ENCODE measurements at regions of chr13 and their contacts with region 1.

Region 1: DNA sequence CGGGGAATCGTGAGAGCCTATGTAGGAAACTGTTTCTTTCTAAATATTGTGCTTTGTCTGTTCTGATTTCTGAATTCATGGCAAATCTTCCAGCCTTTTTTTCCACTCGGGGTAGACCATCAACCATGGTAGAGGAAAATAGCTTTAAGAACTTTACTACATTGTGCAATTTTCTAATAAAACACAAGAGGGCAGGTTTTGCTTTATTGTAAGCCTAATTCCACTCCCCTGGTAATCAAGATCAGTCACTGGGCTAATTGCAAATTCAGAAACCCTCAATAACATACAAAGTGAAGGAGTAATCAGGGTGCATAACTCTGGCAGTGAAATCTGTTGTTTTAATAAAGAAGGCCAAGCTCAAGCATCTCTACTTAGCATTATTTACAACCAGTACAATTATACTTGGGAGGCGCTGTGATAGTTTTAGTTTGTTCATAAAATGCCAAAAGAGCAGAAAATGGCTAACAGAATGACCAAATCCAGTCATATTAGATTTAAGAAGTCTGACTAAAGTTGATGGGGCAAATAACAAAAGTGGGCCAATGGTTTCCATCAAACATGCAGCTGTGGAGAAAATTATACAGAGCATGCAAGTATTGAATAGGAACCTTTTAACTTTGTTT is 43.8 kb downstream of the DCT start:
- DNase-seq: peak; percentile 60
- H3K4me3 ChIP-seq: no peak overlapping the region; a peak in 1 of 4 replicates
- H3K27ac ChIP-seq: no peak overlapping the region
- H3K4me1 ChIP-seq: no peaks in the 10 kb centered on the region; a peak in 1 of 4 replicates
- H3K27me3 ChIP-seq: no peaks in the 10 kb centered on the region; the same call in 1 of the 2 replicates
- CTCF ChIP-seq: peak; percentile 74
- EP300 ChIP-seq: no peak
- RAD21 ChIP-seq: peak; percentile 88

Region 2: DNA sequence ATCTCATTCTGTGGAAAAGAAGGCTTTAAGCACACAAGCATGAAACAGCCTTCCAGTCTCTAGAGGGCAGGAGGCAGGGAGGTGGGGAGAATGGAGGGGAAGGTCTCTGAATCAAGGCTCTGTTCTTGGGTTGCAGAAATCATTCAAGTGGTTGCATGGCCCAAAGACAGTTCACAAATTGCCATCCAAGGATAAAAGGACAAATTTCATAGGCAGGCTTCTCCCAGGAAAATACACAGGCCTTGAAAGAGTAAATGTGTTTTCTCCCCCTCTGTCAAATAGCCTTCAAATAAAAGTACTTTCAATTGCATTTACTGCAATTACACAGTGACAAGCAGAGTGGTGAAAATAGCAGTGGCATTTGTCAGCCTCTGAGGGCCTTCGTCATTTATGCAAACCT is 407.1 kb before region 1 on chr13:
- CTCF ChIA-PET with region 1: no interaction called
- POLR2A ChIA-PET with region 1: no interaction called
- DNase-seq: no peak
- H3K4me3 ChIP-seq: no peak overlapping the region
- H3K27ac ChIP-seq: no peak overlapping the region; a peak in 1 of 4 replicates
- H3K4me1 ChIP-seq: peaks cover 14 to 20% of the 10 kb centered on the region in 2 experiments; a peak in 3 of 4 replicates
- H3K27me3 ChIP-seq: no peaks in the 10 kb centered on the region
- CTCF ChIP-seq: no peak
- EP300 ChIP-seq: no peak
- RAD21 ChIP-seq: no peak

Region 3: DNA sequence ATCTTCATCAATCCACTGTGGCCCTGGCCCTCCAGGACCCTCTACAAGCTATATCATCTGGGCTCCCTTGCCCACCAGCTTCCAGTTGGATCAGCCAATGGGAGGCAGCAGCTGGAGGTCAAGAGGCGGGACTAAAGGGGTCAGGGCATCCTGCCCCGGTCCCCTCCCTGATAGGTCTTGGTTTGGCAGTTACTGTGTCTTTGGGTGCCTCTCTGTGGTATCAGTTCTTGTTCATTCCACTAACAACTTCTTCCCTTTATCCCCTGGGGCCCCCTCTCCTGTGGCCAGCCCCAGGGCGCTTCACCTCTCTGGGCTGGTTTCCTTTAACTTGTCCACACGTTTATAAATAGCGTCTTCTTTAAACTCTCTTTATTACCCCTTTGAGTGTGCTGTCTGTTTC is 39.9 kb before region 1 on chr13:
- CTCF ChIA-PET with region 1: no interaction called
- POLR2A ChIA-PET with region 1: no interaction called
- DNase-seq: no peak
- H3K4me3 ChIP-seq: no peak overlapping the region
- H3K27ac ChIP-seq: no peak overlapping the region
- H3K4me1 ChIP-seq: no peaks in the 10 kb centered on the region; a peak in 1 of 4 replicates
- H3K27me3 ChIP-seq: no peaks in the 10 kb centered on the region
- CTCF ChIP-seq: no peak
- EP300 ChIP-seq: no peak
- RAD21 ChIP-seq: no peak

Region 4: DNA sequence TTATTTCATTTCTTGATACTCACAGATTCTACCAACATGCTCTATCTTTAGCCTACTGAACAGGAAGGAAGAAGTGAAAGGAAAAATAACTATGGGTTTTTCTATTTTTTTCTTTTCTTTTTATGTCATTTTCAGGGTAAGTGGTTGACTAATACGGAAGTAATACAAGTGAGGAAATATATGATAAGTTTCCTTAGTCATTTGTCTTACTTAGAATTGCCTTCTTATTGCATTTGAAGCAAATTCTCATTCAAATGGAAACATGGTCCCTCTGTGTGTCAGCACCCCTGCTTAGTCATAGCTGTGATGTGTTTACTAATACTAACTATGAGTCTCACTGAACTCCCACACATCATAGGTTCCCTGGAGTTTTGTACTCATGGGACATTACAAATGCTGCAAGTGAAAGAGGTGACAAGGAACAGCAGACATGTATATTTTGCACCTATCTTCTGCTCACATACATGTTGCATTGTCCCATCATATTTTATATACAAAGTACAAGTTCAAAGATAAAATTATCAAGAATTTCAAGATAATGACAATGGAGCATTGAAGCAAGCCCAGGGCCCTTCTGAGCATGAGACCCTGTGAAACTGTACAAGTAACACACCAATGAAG is 16.3 kb before region 1 on chr13:
- CTCF ChIA-PET with region 1: interaction called, 13 read pairs
- POLR2A ChIA-PET with region 1: no interaction called
- DNase-seq: no peak
- H3K4me3 ChIP-seq: no peak overlapping the region
- H3K27ac ChIP-seq: no peak overlapping the region
- H3K4me1 ChIP-seq: peaks cover 0 to 5% of the 10 kb centered on the region in 2 experiments; a peak in 3 of 4 replicates
- H3K27me3 ChIP-seq: no peaks in the 10 kb centered on the region
- CTCF ChIP-seq: no peak
- EP300 ChIP-seq: no peak
- RAD21 ChIP-seq: no peak

Region 5: DNA sequence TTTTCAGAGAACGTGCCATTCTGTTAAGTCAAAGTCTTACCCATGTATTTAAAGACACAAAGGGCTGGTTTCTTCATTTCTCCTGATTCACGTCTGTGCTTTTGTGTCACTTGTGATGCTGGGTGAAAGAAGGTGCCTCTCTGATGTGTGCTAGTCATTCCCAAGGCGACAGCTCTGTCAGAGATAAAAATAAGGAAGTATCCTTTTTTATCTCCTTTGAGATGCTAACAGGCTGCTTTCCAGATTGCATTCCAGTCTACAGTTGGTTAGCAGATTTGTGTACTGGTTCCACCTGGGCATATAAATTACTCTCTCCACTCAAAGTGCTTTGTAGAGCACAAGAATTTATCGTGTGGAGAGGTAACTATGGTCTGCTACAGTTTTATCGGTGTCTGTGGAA is 77.3 kb after region 1 on chr13:
- CTCF ChIA-PET with region 1: interaction called, 10 read pairs
- POLR2A ChIA-PET with region 1: no interaction called
- DNase-seq: no peak
- H3K4me3 ChIP-seq: no peak overlapping the region
- H3K27ac ChIP-seq: no peak overlapping the region
- H3K4me1 ChIP-seq: no peaks in the 10 kb centered on the region
- H3K27me3 ChIP-seq: no peaks in the 10 kb centered on the region
- CTCF ChIP-seq: no peak
- EP300 ChIP-seq: no peak
- RAD21 ChIP-seq: no peak

Region 6: GRCh38 chr13:94601446-94602431 is 166.0 kb after region 1 on chr13 and contains the start of gene GPR180:
- CTCF ChIA-PET with region 1: interaction called, 10 read pairs
- POLR2A ChIA-PET with region 1: no interaction called
- DNase-seq: peak; percentile 96
- H3K4me3 ChIP-seq: peak within 1 kb of the TSS; percentile 87 to 100
- H3K27ac ChIP-seq: peak within 1 kb of the TSS; percentile 59 to 86
- H3K4me1 ChIP-seq: peaks cover 0 to 6% of the 10 kb centered on the region in 2 experiments; a peak in 2 of 4 replicates
- H3K27me3 ChIP-seq: no peaks in the 10 kb centered on the region
- CTCF ChIP-seq: no peak
- EP300 ChIP-seq: 0 out of 4 replicates have a peak, but pooled peaks of 1 of the 2 experiments have one; percentile 22
- RAD21 ChIP-seq: no peak
- polyA plus RNA-seq, gene GPR180: 1.8 and 2.2 TPM in 2 replicates

Region 7: GRCh38 chr13:94667190-94667589 is 231.5 kb after region 1 on chr13:
- CTCF ChIA-PET with region 1: no interaction called
- POLR2A ChIA-PET with region 1: no interaction called
- DNase-seq: no peak
- H3K4me3 ChIP-seq: no peak overlapping the region
- H3K27ac ChIP-seq: no peak overlapping the region
- H3K4me1 ChIP-seq: peaks cover 0 to 5% of the 10 kb centered on the region in 2 experiments; a peak in 2 of 4 replicates
- H3K27me3 ChIP-seq: peaks cover 17% of the 10 kb centered on the region; the same call in 1 of the 2 replicates
- CTCF ChIP-seq: no peak
- EP300 ChIP-seq: no peak
- RAD21 ChIP-seq: no peak

Measured in SK-N-SH (cell line).